Right ventricle myocardium superior (tissue), 1 donor: ENCODE measurements at regions of chr7 and their contacts with region 1.

Region 1: DNA sequence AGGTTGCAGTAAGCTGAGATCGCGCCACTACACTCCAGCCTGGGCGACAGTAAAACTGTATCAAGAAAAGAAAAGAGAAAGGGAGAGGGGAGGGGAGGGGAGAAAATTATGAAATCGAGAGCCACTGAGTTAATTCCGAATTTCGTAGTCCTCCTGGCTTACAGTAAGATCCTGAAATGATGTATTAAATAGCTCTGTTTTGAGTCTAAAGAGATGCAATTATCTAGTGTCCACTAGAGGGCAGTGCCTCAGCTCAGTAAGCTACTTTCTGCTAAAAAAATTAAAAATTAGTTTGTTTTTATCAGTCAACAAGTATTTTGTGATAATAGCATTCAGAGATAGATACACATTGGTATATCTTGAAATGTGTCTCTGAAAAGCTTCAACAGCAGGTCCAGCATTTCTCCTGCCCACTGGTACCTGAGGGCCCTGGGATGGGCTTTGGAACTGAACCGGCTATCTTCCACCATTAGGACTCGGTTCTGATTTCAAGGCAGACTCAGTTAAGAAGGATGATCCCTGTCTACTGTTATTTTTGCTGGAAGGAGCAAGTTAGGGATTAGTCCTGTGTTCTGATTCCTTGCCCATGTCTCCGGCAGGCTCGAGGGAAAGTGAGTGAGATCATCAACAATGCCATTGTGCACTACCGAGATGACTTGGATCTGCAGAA is 19.5 kb downstream of the TSPAN33 start:
- DNase-seq: no peak
- ATAC-seq: no peak

Region 2: GRCh38 chr7:129210256-129210988 is 46.4 kb after region 1 on chr7:
- intact Hi-C with region 1: loop called (anchors 5 kb)
- DNase-seq: peak; percentile 90
- ATAC-seq: peak; percentile 97

Region 3: GRCh38 chr7:129295015-129295423 is 131.0 kb after region 1 on chr7:
- intact Hi-C with region 1: no loop called
- DNase-seq: no peak
- ATAC-seq: peak; percentile 75

Region 4: DNA sequence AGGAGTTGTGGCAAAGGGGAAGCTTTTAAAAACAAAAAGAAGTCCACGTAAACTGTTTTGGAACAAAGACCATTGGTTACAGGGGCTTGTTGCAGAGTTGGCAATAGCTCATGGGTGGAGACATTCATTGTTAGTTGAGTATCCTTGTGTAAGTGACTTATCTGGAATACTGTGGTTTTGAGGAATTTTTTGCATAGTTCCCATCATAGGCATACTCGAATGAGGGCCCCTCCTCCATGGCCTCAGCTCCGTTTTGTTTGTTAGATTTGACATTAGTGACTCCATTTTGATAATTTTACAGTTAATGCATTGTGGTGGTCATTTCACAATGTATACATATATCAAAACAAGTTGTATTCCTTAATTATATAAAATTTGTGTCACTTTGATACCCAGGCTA is 325.5 kb after region 1 on chr7:
- intact Hi-C with region 1: no loop called
- DNase-seq: no peak
- ATAC-seq: no peak